HepG2 (cell line): ENCODE measurements at regions of chr4 and their contacts with region 1.

Region 1: DNA sequence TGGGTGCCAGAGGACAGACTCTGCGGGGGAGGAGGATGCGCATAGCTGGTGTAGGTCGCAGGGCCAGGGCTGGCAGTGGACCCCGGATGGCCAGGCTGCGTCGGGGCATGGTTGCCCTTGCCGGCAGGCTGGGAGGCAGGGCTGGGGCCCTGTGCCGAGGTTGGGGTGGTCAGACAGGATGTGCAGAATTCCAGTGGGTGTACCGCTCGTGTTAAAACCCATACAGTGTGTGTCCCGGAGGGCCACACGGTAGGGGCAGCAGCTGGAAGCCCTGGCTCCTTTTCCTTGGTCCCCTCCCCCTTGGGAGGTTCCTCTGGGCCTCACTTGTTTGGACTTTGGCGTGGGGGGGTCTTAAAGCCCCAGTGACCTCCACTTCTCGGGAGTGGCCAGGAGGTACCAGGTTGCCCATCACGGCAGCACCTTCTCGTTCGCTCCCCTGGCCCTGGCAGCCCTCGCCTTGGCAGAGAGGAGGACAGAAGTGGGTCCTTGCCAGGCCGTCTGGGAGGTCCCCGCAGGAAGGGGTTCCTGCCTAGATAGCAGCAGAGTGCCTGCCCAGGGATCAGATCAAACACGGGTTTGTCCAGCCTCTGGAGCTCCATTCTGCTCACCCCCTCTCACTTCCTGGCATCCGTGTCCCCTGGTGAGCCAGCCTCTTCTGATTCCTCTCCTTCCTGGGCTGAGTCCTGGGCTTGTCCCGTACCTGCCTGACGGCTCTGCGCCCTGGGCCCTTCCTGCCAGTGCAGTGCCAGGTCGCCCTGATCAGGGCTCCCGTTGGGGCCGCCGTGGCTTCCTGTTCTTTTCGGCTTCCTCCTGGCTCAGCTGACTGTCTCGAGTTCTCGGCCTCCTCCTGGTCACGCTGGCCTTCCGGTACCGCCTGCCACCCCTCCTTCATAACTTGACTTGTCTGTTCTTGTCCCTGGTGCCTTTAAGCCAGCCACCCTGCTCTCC is 56.7 kb upstream of the HGFAC start:
- DNase-seq: peak; percentile 35
- ATAC-seq: peak; percentile 79
- H3K4me3 ChIP-seq: peak overlapping the region; percentile 59 to 73 (median 60)
- H3K27ac ChIP-seq: peak overlapping the region; percentile 51
- H3K4me1 ChIP-seq: peaks cover 46% of the 10 kb centered on the region
- H3K27me3 ChIP-seq: no peaks in the 10 kb centered on the region
- CTCF ChIP-seq: no peak; the same call in 1 of the 2 replicates
- EP300 ChIP-seq: no peak
- POLR2A ChIP-seq: peak in 1 of 2 experiments; percentile 60; a peak in 2 of 4 replicates
- RAD21 ChIP-seq: no peak

Region 2: DNA sequence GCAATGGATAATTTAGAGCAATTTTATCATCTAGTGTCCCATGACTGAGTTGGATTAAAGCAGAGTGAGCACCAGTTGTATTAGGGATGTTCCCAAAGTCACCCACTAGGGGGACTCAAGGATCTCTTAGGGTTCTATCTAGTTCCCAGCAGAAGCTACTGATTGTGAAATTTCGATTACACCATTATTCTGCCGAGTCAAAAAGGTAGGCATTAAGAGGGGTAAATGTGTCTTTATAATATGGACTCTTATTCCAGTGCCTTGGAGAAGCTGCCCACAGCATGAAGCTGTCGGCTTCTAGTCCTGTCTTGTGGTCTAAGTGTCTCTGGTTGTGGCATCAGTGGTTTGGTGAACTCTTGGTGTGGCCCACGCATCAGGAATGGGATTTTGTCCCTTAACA is 38.9 kb before region 1 on chr4:
- CTCF ChIA-PET with region 1: no interaction called
- POLR2A ChIA-PET with region 1: interaction called, 3 read pairs
- in situ Hi-C with region 1: no loop called
- intact Hi-C with region 1: loop called (anchors 1 kb)
- DNase-seq: peak; percentile 81
- ATAC-seq: peak; percentile 93
- H3K4me3 ChIP-seq: no peak overlapping the region
- H3K27ac ChIP-seq: no peak overlapping the region
- H3K4me1 ChIP-seq: peaks cover 25% of the 10 kb centered on the region
- H3K27me3 ChIP-seq: no peaks in the 10 kb centered on the region
- CTCF ChIP-seq: peak; percentile 83
- EP300 ChIP-seq: no peak
- POLR2A ChIP-seq: no peak
- RAD21 ChIP-seq: peak; percentile 89

Region 3: GRCh38 chr4:3355266-3355748 is 29.8 kb before region 1 on chr4:
- CTCF ChIA-PET with region 1: no interaction called
- POLR2A ChIA-PET with region 1: interaction called, 11 read pairs
- in situ Hi-C with region 1: no loop called
- intact Hi-C with region 1: loop called (anchors 1 kb)
- DNase-seq: no peak
- ATAC-seq: no peak
- H3K4me3 ChIP-seq: peak overlapping the region in 1 of 3 experiments; percentile 49; a peak in 1 of 6 replicates
- H3K27ac ChIP-seq: peak overlapping the region; percentile 92
- H3K4me1 ChIP-seq: peaks cover 56% of the 10 kb centered on the region
- H3K27me3 ChIP-seq: no peaks in the 10 kb centered on the region
- CTCF ChIP-seq: no peak
- EP300 ChIP-seq: no peak
- POLR2A ChIP-seq: no peak
- RAD21 ChIP-seq: no peak

Region 4: GRCh38 chr4:3408793-3409330 is 23.8 kb after region 1 on chr4:
- CTCF ChIA-PET with region 1: no interaction called
- POLR2A ChIA-PET with region 1: interaction called, 12 read pairs
- in situ Hi-C with region 1: no loop called
- intact Hi-C with region 1: no loop called
- DNase-seq: no peak
- ATAC-seq: peak; percentile 26
- H3K4me3 ChIP-seq: no peak overlapping the region
- H3K27ac ChIP-seq: peak overlapping the region; percentile 96
- H3K4me1 ChIP-seq: peaks cover 50% of the 10 kb centered on the region
- H3K27me3 ChIP-seq: no peaks in the 10 kb centered on the region
- CTCF ChIP-seq: no peak
- EP300 ChIP-seq: no peak
- POLR2A ChIP-seq: no peak
- RAD21 ChIP-seq: no peak